Activated CD4-positive, alpha-beta memory T cell treated with anti-CD3 and anti-CD28 coated beads, Interleukin-2, amount 10 ng/mL, durations not matched to agents 7 days and 5 days (primary cell): ENCODE measurements at regions of chr11 and their contacts with region 1.

Region 1: DNA sequence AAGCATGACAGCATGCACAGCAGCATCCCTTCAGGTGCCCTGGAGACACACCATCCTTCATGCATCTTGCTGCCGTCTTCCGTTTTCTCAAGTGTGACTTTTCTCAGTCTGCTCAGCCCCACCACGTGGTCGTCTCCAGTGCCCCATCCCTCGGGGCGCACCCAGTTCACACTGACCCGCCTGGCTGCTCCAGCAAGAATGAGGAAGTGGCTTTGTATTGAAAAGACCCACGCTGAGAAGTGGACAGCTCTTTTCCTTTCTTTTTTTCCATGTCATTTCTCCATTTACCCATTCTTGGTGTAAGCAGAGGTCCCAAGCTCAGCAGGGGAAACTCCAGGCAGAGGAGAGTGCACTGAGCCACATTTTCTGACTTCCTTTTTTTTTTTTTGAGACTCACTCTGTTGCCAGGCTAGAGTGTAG is 14.5 kb downstream of the SERPINH1 start:
- DNase-seq: no peak
- H3K4me3 Mint-ChIP-seq: no peak overlapping the region
- H3K27ac Mint-ChIP-seq: no peak overlapping the region
- H3K4me1 Mint-ChIP-seq: peaks cover 14% of the 10 kb centered on the region
- H3K27me3 Mint-ChIP-seq: no peaks in the 10 kb centered on the region

Region 2: GRCh38 chr11:75114465-75114864 is 462.0 kb before region 1 on chr11:
- CTCF ChIA-PET with region 1: no interaction called
- POLR2A ChIA-PET with region 1: no interaction called
- DNase-seq: no peak
- H3K4me3 Mint-ChIP-seq: no peak overlapping the region
- H3K27ac Mint-ChIP-seq: no peak overlapping the region
- H3K4me1 Mint-ChIP-seq: no peaks in the 10 kb centered on the region
- H3K27me3 Mint-ChIP-seq: peaks cover 26% of the 10 kb centered on the region

Region 3: GRCh38 chr11:75313513-75314272 is 262.8 kb before region 1 on chr11:
- CTCF ChIA-PET with region 1: no interaction called
- POLR2A ChIA-PET with region 1: no interaction called
- DNase-seq: no peak
- H3K4me3 Mint-ChIP-seq: no peak overlapping the region
- H3K27ac Mint-ChIP-seq: no peak overlapping the region
- H3K4me1 Mint-ChIP-seq: peaks cover 4% of the 10 kb centered on the region
- H3K27me3 Mint-ChIP-seq: no peaks in the 10 kb centered on the region

Region 4: DNA sequence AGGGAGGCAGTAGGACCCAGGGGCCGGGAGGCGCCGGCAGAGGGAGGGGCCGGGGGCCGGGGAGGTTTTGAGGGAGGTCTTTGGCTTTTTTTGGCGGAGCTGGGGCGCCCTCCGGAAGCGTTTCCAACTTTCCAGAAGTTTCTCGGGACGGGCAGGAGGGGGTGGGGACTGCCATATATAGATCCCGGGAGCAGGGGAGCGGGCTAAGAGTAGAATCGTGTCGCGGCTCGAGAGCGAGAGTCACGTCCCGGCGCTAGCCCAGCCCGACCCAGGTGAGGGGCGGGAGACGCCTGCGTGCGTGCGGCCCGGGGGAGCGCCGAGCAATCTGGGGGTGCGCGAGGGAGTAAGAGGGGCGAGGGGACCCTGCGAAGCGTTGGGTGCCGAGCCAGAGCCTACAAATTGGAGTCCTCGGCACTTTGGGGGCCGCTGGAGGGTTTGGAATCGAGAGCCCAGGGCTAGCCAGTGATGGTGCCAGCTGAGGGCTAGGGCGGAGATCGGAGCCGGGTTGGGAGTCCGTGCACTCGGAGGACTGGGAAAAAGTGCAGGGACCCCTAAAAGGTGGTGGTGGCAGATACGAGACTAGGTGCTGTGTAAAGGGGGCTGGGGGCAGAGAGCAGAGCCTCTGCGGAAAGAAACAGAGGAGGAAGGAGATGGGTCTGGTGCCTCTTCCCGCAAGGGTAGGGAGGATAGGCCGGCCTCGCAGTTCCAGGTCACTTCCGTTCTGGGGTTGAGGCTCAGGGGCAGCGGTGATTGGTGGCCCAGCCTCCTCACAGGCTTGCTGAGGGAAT is 14.3 kb before region 1 on chr11 and contains the start of gene SERPINH1:
- CTCF ChIA-PET with region 1: interaction called, 14 read pairs
- POLR2A ChIA-PET with region 1: interaction called, 19 read pairs
- DNase-seq: peak; percentile 74
- H3K4me3 Mint-ChIP-seq: peak within 1 kb of the TSS; percentile 99
- H3K27ac Mint-ChIP-seq: peak within 1 kb of the TSS; percentile 93
- H3K4me1 Mint-ChIP-seq: peaks cover 33% of the 10 kb centered on the region
- H3K27me3 Mint-ChIP-seq: no peaks in the 10 kb centered on the region
- total RNA-seq, gene SERPINH1: 12.2 to 13.3 TPM

Region 5: GRCh38 chr11:75826461-75827230 is 250.1 kb after region 1 on chr11:
- CTCF ChIA-PET with region 1: no interaction called
- POLR2A ChIA-PET with region 1: no interaction called
- DNase-seq: no peak
- H3K4me3 Mint-ChIP-seq: no peak overlapping the region
- H3K27ac Mint-ChIP-seq: no peak overlapping the region
- H3K4me1 Mint-ChIP-seq: peaks cover 23% of the 10 kb centered on the region
- H3K27me3 Mint-ChIP-seq: no peaks in the 10 kb centered on the region